Natural killer cell (primary cell): ENCODE measurements at regions of chr17 and their contacts with region 1.

Region 1: GRCh38 chr17:48047741-48048383 is at the start of gene NFE2L1:
- DNase-seq: peak; percentile 97 to 99
- ATAC-seq: peak; percentile 93 to 99 (median 95)
- H3K4me3 ChIP-seq: peak within 1 kb of the TSS; percentile 69
- H3K4me3 Mint-ChIP-seq: peak within 1 kb of the TSS; percentile 98
- H3K27ac ChIP-seq: peak within 1 kb of the TSS; percentile 88
- H3K27ac Mint-ChIP-seq: peak within 1 kb of the TSS; percentile 96 to 97
- H3K4me1 ChIP-seq: peaks cover 32% of the 10 kb centered on the region
- H3K4me1 Mint-ChIP-seq: peaks cover 55 to 64% of the 10 kb centered on the region in 2 donors
- H3K27me3 ChIP-seq: no peaks in the 10 kb centered on the region
- H3K27me3 Mint-ChIP-seq: no peaks in the 10 kb centered on the region
- CTCF ChIP-seq: no peak
- total RNA-seq, gene NFE2L1: 38.6 to 53.4 (median 47.5) TPM

Region 2: DNA sequence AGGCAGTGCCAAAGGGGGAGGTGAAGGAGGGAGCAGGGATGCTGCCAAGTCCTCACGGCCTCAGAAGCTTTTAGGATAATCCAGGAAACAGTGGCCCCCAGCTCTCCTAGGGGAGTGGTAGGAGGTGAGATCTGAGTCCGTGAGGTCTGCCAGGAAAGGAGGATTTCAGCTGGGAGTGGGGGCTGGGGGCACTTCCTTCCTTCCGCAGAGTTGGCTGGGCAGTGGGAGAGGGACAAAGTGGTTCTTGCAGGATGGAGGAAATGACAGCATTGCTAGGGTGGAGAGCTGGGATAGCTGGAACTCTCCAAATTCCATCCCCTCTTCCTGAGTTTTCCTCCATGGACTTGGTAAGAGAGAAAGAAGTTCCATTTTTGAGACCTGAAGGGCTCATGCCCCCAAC is 192.1 kb before region 1 on chr17:
- intact Hi-C with region 1: no loop called
- DNase-seq: no peak
- ATAC-seq: no peak
- H3K4me3 ChIP-seq: no peak overlapping the region
- H3K4me3 Mint-ChIP-seq: no peak overlapping the region
- H3K27ac ChIP-seq: no peak overlapping the region
- H3K27ac Mint-ChIP-seq: no peak overlapping the region
- H3K4me1 ChIP-seq: peaks cover 14% of the 10 kb centered on the region
- H3K4me1 Mint-ChIP-seq: peaks cover 10 to 12% of the 10 kb centered on the region in 2 donors
- H3K27me3 ChIP-seq: peaks cover 25% of the 10 kb centered on the region
- H3K27me3 Mint-ChIP-seq: peaks cover 68 to 78% of the 10 kb centered on the region in 2 donors
- CTCF ChIP-seq: no peak

Region 3: DNA sequence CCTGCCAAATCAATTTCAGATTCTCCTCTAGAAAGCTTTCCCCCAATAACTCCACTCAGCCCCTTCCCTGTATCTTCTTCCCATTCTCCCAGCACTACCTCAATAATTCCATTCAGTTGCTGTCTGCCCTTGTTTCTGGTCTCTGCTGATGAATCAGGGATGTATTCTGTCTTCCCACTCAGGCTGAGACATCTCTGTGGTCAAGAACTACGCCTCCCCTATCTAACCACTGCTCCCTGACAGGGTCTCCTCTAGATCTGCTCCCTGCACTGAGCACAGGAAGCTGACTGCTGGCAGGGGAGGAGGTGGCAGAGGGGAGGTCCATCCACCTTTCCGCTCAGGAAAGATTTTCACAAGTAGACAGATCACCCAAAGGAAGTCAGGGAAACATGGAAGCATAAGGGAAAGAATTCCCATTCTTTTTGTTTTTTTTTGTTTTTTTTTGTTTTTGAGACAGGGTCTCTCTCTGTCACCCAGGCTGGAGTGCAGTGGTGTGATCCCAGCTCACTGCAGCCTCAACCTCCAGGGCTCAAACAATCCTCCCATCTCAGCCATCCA is 168.8 kb before region 1 on chr17:
- intact Hi-C with region 1: no loop called
- DNase-seq: no peak
- ATAC-seq: no peak
- H3K4me3 ChIP-seq: no peak overlapping the region
- H3K4me3 Mint-ChIP-seq: no peak overlapping the region
- H3K27ac ChIP-seq: no peak overlapping the region
- H3K27ac Mint-ChIP-seq: no peak overlapping the region
- H3K4me1 ChIP-seq: peaks cover 8% of the 10 kb centered on the region
- H3K4me1 Mint-ChIP-seq: peaks cover 0 to 6% of the 10 kb centered on the region in 2 donors
- H3K27me3 ChIP-seq: no peaks in the 10 kb centered on the region
- H3K27me3 Mint-ChIP-seq: peaks cover 22 to 33% of the 10 kb centered on the region in 2 donors
- CTCF ChIP-seq: no peak

Region 4: GRCh38 chr17:47905221-47905781 is 142.6 kb before region 1 on chr17:
- intact Hi-C with region 1: no loop called
- DNase-seq: no peak
- ATAC-seq: no peak
- H3K4me3 ChIP-seq: no peak overlapping the region
- H3K4me3 Mint-ChIP-seq: no peak overlapping the region
- H3K27ac ChIP-seq: no peak overlapping the region
- H3K27ac Mint-ChIP-seq: peak overlapping the region; percentile 46 to 83
- H3K4me1 ChIP-seq: no peaks in the 10 kb centered on the region
- H3K4me1 Mint-ChIP-seq: peaks cover 33 to 45% of the 10 kb centered on the region in 2 donors
- H3K27me3 ChIP-seq: no peaks in the 10 kb centered on the region
- H3K27me3 Mint-ChIP-seq: no peaks in the 10 kb centered on the region
- CTCF ChIP-seq: no peak

Region 5: DNA sequence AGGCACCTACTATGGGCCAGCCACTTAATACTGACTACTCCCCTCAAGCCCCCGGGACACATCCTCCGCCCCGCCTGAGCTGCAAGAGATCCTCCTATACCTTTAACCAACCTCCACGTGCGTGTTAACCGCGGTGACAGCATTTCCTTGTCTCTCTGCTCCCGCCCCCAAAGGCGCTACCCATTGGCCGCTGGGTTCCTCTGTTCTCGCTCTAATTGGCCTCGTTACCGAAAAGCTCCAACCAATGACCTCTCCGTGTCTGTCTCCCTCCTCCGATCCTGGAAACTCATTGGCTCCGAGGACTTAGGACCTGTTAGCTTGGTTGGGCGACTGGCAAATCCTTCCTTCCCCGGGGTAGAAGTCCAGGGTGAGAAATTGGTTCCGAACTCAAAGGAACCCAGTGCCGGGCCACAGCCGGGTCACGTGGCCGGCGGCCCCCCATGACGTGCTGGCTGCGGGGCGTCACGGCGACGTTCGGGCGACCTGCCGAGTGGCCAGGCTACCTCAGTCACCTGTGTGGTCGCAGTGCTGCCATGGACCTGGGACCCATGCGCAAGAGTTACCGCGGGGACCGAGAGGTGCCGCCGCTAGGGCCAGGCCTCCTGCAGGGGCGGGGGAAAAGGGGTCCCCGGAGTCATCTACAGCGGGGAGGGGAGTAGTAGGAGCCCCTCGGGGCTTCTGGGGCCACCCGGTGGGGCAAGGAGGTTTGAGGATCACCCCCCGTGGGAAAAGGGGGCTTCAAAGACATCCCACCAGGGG is 106.4 kb before region 1 on chr17 and contains the start of gene PNPO:
- intact Hi-C with region 1: loop called (anchors 1 kb)
- DNase-seq: peak; percentile 90 to 97
- ATAC-seq: peak; percentile 96 to 99 (median 97)
- H3K4me3 ChIP-seq: peak within 1 kb of the TSS; percentile 79
- H3K4me3 Mint-ChIP-seq: peak within 1 kb of the TSS; percentile 93
- H3K27ac ChIP-seq: peak within 1 kb of the TSS; percentile 72
- H3K27ac Mint-ChIP-seq: peak within 1 kb of the TSS; percentile 87 to 92
- H3K4me1 ChIP-seq: peaks cover 36% of the 10 kb centered on the region
- H3K4me1 Mint-ChIP-seq: peaks cover 27 to 37% of the 10 kb centered on the region in 2 donors
- H3K27me3 ChIP-seq: no peaks in the 10 kb centered on the region
- H3K27me3 Mint-ChIP-seq: no peaks in the 10 kb centered on the region
- CTCF ChIP-seq: no peak
- total RNA-seq, gene PNPO: 6.0 to 10.9 (median 9.3) TPM

Region 6: DNA sequence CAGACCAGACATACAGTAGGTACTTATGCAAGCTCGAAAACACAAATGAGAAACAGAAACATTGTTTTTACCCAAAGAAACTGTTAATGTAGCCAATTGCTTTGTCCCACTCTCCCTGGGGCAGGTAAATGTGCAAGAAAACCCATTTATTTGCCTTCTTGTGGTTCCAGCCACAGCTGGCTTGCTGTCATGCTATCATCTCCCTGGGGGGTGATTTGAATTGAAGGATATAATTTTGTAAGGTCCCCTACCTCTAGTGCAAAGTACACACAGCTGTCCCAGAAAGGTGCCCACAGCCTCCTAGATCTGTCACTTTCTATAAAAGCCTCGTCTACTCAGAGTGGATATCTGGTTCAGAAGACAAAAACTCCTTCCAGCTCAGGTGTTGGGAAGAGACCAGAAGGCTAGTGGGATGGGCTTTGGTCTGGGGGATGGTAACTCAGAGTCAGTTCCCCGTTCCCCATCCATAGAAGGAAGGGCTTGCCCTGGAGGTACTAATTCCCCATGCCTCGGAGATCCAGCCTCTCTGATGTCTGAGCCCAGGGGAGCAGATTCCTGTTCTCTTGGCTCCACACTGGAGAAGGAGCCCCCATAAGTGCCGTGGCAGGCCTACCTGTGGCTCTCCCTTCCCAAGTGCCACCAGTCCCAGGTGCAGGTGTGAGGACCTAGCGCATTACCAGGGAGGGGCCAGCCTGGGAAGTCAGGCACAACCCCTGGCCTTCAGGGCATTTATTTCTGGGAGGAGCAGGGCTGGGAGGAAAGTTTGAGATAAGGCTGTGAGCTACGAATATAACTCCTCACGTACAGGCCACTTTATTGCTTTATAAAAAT is 87.8 kb before region 1 on chr17:
- intact Hi-C with region 1: no loop called
- DNase-seq: no peak
- ATAC-seq: no peak
- H3K4me3 ChIP-seq: no peak overlapping the region
- H3K4me3 Mint-ChIP-seq: no peak overlapping the region
- H3K27ac ChIP-seq: no peak overlapping the region
- H3K27ac Mint-ChIP-seq: no peak overlapping the region
- H3K4me1 ChIP-seq: no peaks in the 10 kb centered on the region
- H3K4me1 Mint-ChIP-seq: no peaks in the 10 kb centered on the region
- H3K27me3 ChIP-seq: no peaks in the 10 kb centered on the region
- H3K27me3 Mint-ChIP-seq: no peaks in the 10 kb centered on the region
- CTCF ChIP-seq: no peak

Region 7: DNA sequence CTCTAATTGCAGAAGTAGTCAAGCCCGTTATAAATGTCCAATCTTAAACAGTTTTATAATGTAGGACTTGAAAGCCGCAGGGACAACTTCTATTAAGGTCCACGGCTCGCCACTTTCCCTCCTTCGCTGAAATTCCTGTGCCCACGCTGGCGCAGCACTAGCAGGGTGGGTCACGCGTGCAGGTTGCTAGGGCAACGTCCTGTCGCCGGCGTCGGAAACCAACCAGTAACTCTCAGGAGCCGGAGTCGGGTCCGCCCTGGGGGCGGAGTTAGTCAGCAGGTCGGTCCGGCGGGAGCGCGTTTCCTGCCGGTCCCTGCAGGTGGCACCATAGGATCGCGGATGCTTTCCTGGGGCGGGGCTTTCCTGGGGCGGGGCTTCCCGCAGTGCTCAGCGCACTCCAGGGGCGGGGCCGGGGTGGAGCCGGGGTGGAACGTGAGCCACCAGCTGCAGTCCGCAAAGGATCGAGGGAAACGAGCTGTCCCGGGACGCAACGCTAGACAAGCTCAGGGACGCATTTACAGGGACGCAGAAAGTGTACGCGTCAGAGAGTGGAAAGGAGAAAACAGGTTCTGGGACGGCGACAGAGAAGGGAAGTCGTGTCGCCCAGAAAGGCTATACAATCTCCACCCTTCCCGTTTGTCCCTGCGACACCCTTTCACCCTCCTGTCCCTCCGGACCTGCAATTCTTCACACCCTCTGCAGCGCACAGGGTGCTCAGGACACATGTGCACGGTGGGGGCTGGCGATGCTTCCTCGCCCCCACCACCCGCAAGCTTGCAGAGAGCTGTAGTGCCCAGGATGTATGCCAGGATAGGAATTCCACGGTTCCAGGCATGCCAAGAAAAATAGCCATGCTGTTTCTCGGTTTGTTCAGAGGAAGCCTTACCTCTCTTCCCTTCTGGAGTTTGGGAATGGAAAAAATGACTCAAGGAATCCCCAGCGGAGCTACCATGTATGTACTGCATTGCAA is 22.6 kb before region 1 on chr17:
- intact Hi-C with region 1: loop called (anchors 1 kb)
- DNase-seq: peak; percentile 93 to 99
- ATAC-seq: peak; percentile 91 to 98 (median 94)
- H3K4me3 ChIP-seq: peak overlapping the region; percentile 29
- H3K4me3 Mint-ChIP-seq: peak overlapping the region; percentile 94
- H3K27ac ChIP-seq: no peak overlapping the region
- H3K27ac Mint-ChIP-seq: peak overlapping the region; percentile 75 to 86
- H3K4me1 ChIP-seq: peaks cover 36% of the 10 kb centered on the region
- H3K4me1 Mint-ChIP-seq: peaks cover 34% of the 10 kb centered on the region in 2 donors
- H3K27me3 ChIP-seq: peaks cover 17% of the 10 kb centered on the region
- H3K27me3 Mint-ChIP-seq: peaks cover 30 to 42% of the 10 kb centered on the region in 2 donors
- CTCF ChIP-seq: peak; percentile 76

Region 8: DNA sequence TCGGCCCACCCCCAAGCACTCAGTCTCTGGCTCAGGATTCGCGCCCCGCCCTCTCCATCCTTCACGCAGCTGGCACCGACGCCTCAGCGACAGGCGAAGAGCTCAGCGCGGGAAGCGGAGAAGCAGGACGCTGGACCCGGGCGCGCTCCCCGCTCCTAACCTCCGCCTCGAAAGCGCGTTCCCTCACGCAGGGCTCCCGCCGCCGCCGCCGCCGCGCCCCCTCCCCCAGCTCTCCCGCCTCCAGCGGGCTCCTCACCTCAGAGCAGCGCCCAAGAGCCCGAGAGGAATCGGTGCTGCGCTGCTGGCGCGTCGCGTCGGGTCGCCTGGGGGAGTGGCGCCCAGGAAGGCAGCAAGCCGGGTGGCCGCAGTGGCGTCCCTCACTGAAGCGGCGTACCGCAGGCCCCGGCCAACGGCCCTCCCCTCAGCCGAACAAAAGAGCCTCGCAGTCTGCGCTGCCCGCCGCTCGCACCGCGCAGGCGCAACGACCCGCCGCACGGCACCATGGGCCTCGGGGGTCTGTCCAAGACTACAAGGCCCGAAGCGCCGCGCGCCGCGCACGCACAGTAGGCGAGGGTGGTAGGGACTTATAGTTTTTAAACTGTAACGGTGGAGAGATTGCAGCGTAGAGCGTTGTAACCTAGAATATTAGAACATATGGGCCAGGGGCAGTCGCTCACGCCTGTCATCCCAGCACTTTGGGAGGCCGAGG is 53.3 kb after region 1 on chr17 and contains the start of gene CBX1:
- intact Hi-C with region 1: loop called (anchors 2 kb)
- DNase-seq: peak; percentile 86 to 96
- ATAC-seq: peak; percentile 92 to 98 (median 94)
- H3K4me3 ChIP-seq: peak within 1 kb of the TSS; percentile 83
- H3K4me3 Mint-ChIP-seq: peak within 1 kb of the TSS; percentile 93
- H3K27ac ChIP-seq: peak within 1 kb of the TSS; percentile 59
- H3K27ac Mint-ChIP-seq: peak within 1 kb of the TSS; percentile 86 to 92
- H3K4me1 ChIP-seq: peaks cover 40% of the 10 kb centered on the region
- H3K4me1 Mint-ChIP-seq: peaks cover 31 to 51% of the 10 kb centered on the region in 2 donors
- H3K27me3 ChIP-seq: no peaks in the 10 kb centered on the region
- H3K27me3 Mint-ChIP-seq: no peaks in the 10 kb centered on the region
- CTCF ChIP-seq: no peak
- total RNA-seq, gene CBX1: 16.9 to 25.4 (median 22.6) TPM